ENCODE measurements at regions of chr10 and their contacts with region 1.

Region 1: DNA sequence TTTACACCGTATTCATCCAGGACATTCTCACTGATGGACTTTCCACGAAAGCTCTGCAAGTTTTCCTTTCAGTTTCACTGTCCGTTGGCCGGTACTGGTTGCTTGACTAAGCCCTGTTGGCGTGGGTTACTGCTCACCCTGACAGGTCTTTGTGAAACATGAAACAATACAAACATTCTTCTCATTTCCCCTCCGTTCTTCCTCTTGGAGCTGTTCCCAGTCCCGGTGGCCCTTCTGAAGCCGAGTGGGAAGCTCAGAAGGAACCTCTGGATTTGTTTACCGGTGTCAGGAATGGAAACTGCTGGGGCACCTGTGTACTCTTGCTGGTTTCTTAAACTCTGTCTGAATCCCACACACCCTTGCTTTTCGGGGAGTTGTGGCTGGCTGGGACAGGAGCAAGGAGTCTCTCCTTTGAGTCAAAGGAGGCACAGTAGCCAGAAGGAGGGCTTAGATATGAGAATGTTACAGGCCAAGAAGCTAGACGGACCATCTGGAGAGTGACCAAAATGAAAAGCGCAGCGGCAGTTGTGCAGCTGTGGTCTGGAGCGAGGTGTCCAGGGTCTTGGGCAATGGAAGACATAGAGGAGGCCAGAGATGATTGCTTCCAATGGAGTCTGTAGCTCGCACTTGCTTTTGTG is 45.7 kb downstream of the LYZL2 start:
- DNase-seq: peak; percentile 27
- ATAC-seq: no peak
- H3K4me3 ChIP-seq: peak overlapping the region in 4 of 5 experiments; percentile 24 to 51 (median 49)
- H3K4me3 Mint-ChIP-seq: peak overlapping the region; percentile 63
- H3K27ac ChIP-seq: no peak overlapping the region
- H3K27ac Mint-ChIP-seq: no peak overlapping the region
- H3K4me1 ChIP-seq: peaks cover 24 to 27% of the 10 kb centered on the region in 2 donors
- H3K4me1 Mint-ChIP-seq: peaks cover 27% of the 10 kb centered on the region
- H3K27me3 ChIP-seq: no peaks in the 10 kb centered on the region
- H3K27me3 Mint-ChIP-seq: no peaks in the 10 kb centered on the region
- CTCF ChIP-seq: no peak

Region 2: GRCh38 chr10:30392564-30392990 is 191.3 kb before region 1 on chr10:
- CTCF ChIA-PET with region 1: interaction called, 258 read pairs
- POLR2A ChIA-PET with region 1: no interaction called
- intact Hi-C with region 1: loop called (anchors 1 kb)
- DNase-seq: peak; percentile 82
- ATAC-seq: peak; percentile 100
- H3K4me3 ChIP-seq: no peak overlapping the region
- H3K4me3 Mint-ChIP-seq: no peak overlapping the region
- H3K27ac ChIP-seq: no peak overlapping the region
- H3K27ac Mint-ChIP-seq: no peak overlapping the region
- H3K4me1 ChIP-seq: peaks cover 4 to 5% of the 10 kb centered on the region in 2 donors
- H3K4me1 Mint-ChIP-seq: peaks cover 3% of the 10 kb centered on the region
- H3K27me3 ChIP-seq: no peaks in the 10 kb centered on the region
- H3K27me3 Mint-ChIP-seq: peaks cover 15% of the 10 kb centered on the region
- CTCF ChIP-seq: peak; percentile 97

Region 3: GRCh38 chr10:30562787-30563186 is 21.1 kb before region 1 on chr10:
- CTCF ChIA-PET with region 1: interaction called, 10 read pairs
- POLR2A ChIA-PET with region 1: no interaction called
- intact Hi-C with region 1: no loop called
- DNase-seq: no peak
- ATAC-seq: no peak
- H3K4me3 ChIP-seq: no peak overlapping the region
- H3K4me3 Mint-ChIP-seq: no peak overlapping the region
- H3K27ac ChIP-seq: no peak overlapping the region
- H3K27ac Mint-ChIP-seq: no peak overlapping the region
- H3K4me1 ChIP-seq: no peaks in the 10 kb centered on the region
- H3K4me1 Mint-ChIP-seq: no peaks in the 10 kb centered on the region
- H3K27me3 ChIP-seq: peaks cover 0 to 4% (median 0%) of the 10 kb centered on the region in 4 experiments
- H3K27me3 Mint-ChIP-seq: peaks cover 18% of the 10 kb centered on the region
- CTCF ChIP-seq: no peak